Activated B cell treated with CpG ODN at 0.5 μM for 24 hours (primary cell): ENCODE measurements at regions of chr1 and their contacts with region 1.

Region 1: GRCh38 chr1:157806431-157807149 is 13.3 kb downstream of the FCRL1 start:
- DNase-seq: peak; percentile 60
- ATAC-seq: peak; percentile 91
- H3K4me3 Mint-ChIP-seq: peak overlapping the region; percentile 61
- H3K27ac Mint-ChIP-seq: peak overlapping the region; percentile 88
- H3K4me1 Mint-ChIP-seq: peaks cover 98% of the 10 kb centered on the region
- H3K27me3 Mint-ChIP-seq: no peaks in the 10 kb centered on the region
- CTCF ChIP-seq: no peak

Region 2: DNA sequence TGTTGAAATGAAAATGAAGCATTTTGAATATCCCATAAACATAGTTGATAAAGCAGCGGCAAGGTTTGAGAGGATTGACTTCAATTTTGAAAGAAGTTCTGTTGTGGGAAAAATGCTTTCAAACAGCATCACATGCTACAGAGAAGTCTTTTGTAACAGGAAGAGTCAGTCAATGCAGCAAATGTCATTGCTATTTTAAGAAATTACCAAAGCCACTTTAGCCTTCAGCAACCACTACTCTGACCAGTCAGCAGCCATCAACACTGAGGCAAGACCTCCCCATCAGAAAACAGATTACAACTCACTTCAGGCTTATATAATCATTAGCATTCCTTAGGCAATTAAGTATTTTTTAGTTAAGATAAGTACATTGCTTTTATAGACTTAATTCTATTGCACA is 72.3 kb before region 1 on chr1:
- CTCF ChIA-PET with region 1: no interaction called
- POLR2A ChIA-PET with region 1: no interaction called
- intact Hi-C with region 1: loop called (anchors 2 kb)
- DNase-seq: no peak
- ATAC-seq: peak; percentile 77
- H3K4me3 Mint-ChIP-seq: peak overlapping the region; percentile 39
- H3K27ac Mint-ChIP-seq: peak overlapping the region; percentile 88
- H3K4me1 Mint-ChIP-seq: peaks cover 78% of the 10 kb centered on the region
- H3K27me3 Mint-ChIP-seq: no peaks in the 10 kb centered on the region
- CTCF ChIP-seq: no peak

Region 3: DNA sequence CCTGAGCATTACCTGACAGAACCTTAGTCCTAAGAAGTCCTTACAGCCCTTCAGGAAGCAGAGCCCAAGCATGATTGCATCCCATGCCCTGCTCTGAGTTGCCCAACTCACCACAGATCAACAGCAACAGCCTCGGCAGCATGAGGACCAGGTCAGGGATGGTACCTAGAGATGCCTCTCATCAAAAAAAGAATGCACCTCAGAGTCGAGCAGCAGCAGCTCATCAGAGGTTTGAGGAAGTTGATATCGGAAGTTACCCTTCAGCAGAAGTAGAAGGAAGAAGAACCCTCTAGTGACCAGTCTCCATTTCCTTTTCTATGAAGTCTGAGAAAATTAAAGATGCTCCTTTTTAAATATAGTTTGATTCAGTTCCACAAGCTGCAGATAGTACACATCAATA is 13.3 kb after region 1 on chr1 and contains the start of gene FCRL1:
- CTCF ChIA-PET with region 1: interaction called, 4 read pairs
- POLR2A ChIA-PET with region 1: interaction called, 30 read pairs
- intact Hi-C with region 1: loop called (anchors 1 kb)
- DNase-seq: peak; percentile 33
- ATAC-seq: peak; percentile 88
- H3K4me3 Mint-ChIP-seq: no peak within 1 kb of the TSS
- H3K27ac Mint-ChIP-seq: no peak within 1 kb of the TSS
- H3K4me1 Mint-ChIP-seq: peaks cover 28% of the 10 kb centered on the region
- H3K27me3 Mint-ChIP-seq: no peaks in the 10 kb centered on the region
- CTCF ChIP-seq: no peak
- total RNA-seq, gene FCRL1: 111 and 138 TPM in 2 replicates

Region 4: DNA sequence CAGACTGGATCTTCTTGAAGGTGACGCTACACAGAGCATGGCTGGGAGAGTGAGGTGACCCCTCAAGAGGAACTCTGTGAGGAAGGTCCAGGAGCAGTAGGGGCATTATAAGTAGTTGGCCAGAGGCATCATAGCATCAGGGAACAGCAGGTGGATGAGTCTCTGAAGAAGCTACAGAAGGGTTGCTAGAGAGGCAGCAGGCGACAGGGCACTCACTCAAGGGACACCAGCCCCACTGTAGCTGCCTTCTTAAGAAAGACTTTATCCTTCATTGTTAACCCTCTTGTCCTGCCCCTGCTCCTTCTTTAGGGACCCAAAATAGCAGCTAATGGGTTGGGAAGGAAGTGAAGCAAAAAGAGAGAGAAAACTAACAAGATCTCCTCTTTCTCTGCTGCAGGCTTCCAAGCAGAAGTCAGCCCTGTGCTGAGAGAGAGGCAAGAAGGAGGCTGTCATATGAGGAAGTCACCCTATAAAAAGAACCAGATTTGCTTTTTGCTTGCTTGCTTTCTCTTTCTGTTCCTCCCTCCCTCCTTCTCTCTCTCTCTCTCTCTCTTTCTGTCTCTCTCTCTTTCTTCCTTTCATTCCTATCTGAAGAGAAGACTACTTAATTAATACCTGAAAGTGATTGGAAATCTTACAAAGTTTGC is 42.8 kb after region 1 on chr1:
- CTCF ChIA-PET with region 1: no interaction called
- POLR2A ChIA-PET with region 1: interaction called, 8 read pairs
- intact Hi-C with region 1: loop called (anchors 2 kb)
- DNase-seq: no peak
- ATAC-seq: peak; percentile 87
- H3K4me3 Mint-ChIP-seq: peak overlapping the region; percentile 81
- H3K27ac Mint-ChIP-seq: peak overlapping the region; percentile 94
- H3K4me1 Mint-ChIP-seq: peaks cover 64% of the 10 kb centered on the region
- H3K27me3 Mint-ChIP-seq: no peaks in the 10 kb centered on the region
- CTCF ChIP-seq: no peak

Region 5: GRCh38 chr1:157932069-157932468 is 125.5 kb after region 1 on chr1:
- CTCF ChIA-PET with region 1: no interaction called
- POLR2A ChIA-PET with region 1: no interaction called
- intact Hi-C with region 1: no loop called
- DNase-seq: no peak
- ATAC-seq: no peak
- H3K4me3 Mint-ChIP-seq: no peak overlapping the region
- H3K27ac Mint-ChIP-seq: no peak overlapping the region
- H3K4me1 Mint-ChIP-seq: no peaks in the 10 kb centered on the region
- H3K27me3 Mint-ChIP-seq: no peaks in the 10 kb centered on the region
- CTCF ChIP-seq: no peak